ENCODE measurements at regions of chr7 and their contacts with region 1.

Region 1: GRCh38 chr7:141014524-141015395 is at the start of gene MRPS33:
- DNase-seq: peak; percentile 97
- H3K4me3 Mint-ChIP-seq: peak within 1 kb of the TSS; percentile 98
- H3K27ac Mint-ChIP-seq: peak within 1 kb of the TSS; percentile 100
- H3K4me1 Mint-ChIP-seq: peaks cover 33% of the 10 kb centered on the region
- H3K27me3 Mint-ChIP-seq: peaks cover 5% of the 10 kb centered on the region
- total RNA-seq, gene MRPS33: 95.4 to 95.8 TPM

Region 2: DNA sequence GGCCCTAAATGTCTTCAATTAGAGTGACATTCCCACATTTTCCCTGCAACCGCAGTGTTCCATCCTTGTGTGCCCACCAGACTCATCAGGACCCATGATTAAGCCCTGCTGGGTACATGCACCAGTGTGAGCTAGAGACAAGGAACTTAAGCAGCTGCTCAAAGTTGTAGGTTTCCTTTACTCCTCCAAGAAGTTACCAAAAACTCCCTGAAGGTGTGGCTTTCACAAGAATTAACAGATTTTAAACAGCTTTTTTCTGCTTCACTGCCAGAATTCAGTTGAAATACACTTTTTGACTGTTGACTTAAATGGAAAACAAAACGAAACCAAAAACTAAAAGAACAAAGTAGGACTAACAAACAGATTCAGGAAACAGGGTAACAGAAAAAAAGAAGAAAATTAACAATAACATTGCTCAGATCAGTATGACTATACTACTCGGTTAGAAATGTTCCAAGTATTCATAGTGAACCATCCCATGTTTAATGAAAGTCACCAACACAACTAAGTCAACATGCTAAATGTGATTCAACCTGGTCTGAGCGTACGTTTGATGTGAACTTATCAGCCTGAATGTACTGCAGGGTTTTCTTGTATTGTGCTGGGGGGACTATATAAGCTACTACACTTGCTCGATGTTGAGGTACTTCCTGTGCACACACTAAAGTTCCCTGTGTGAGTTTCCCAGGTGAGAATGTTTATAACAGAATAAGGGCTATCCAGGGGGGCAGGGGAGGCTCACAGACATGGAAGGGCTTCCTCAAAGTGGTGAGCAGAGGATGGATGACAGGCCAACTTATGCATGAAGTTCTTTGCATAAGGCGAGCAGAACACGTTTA is 638.6 kb before region 1 on chr7:
- CTCF ChIA-PET with region 1: no interaction called
- POLR2A ChIA-PET with region 1: no interaction called
- intact Hi-C with region 1: loop called (anchors 10 kb)
- DNase-seq: peak; percentile 61
- H3K4me3 Mint-ChIP-seq: peak overlapping the region; percentile 62
- H3K27ac Mint-ChIP-seq: peak overlapping the region; percentile 99
- H3K4me1 Mint-ChIP-seq: peaks cover 51% of the 10 kb centered on the region
- H3K27me3 Mint-ChIP-seq: no peaks in the 10 kb centered on the region

Region 3: GRCh38 chr7:140517546-140518369 is 497.0 kb before region 1 on chr7:
- CTCF ChIA-PET with region 1: interaction called, 8 read pairs
- POLR2A ChIA-PET with region 1: no interaction called
- intact Hi-C with region 1: loop called (anchors 1 kb)
- DNase-seq: peak; percentile 83
- H3K4me3 Mint-ChIP-seq: no peak overlapping the region
- H3K27ac Mint-ChIP-seq: no peak overlapping the region
- H3K4me1 Mint-ChIP-seq: no peaks in the 10 kb centered on the region
- H3K27me3 Mint-ChIP-seq: peaks cover 7% of the 10 kb centered on the region

Region 4: DNA sequence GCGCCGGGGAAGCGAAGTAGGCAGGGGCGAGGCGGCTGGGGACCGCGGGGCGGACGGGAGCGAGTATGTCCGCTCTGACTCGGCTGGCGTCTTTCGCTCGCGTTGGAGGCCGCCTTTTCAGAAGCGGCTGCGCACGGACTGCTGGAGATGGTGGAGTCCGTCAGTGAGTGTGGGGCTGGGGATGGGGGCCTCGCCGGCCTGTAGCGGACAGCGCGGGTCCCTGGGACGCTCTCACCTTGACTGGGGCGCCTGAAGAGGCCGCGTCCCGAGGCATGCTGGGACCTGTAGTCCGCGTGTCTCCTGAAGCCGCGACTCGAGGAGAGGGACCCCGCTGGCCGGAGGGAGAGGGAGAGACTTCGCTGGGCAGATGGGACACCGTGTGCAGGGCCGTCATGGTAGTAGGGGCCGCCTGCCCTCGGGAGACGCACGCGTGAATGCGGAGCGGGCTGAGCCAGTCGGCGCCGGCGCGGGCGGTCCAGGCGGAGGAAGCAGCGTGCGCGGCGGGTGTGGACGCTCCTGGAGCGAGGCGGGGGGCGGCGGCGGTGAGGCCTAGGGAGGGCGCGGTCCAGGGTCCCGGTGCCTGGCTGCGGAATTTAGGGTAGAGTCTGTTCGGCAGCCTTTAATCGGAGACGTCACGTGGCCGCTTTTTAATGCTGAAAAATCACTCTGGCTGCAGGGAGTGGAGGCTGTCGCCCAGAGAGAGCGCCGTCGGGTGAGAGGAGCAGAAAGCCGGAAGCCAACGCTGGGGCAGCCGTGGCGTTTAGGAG is 317.9 kb before region 1 on chr7 and contains the start of gene NDUFB2:
- CTCF ChIA-PET with region 1: no interaction called
- POLR2A ChIA-PET with region 1: no interaction called
- intact Hi-C with region 1: loop called (anchors 1 kb)
- DNase-seq: peak; percentile 80
- H3K4me3 Mint-ChIP-seq: peak within 1 kb of the TSS; percentile 95
- H3K27ac Mint-ChIP-seq: peak within 1 kb of the TSS; percentile 97
- H3K4me1 Mint-ChIP-seq: peaks cover 32% of the 10 kb centered on the region
- H3K27me3 Mint-ChIP-seq: no peaks in the 10 kb centered on the region
- total RNA-seq, gene NDUFB2: 171 to 183 TPM

Region 5: DNA sequence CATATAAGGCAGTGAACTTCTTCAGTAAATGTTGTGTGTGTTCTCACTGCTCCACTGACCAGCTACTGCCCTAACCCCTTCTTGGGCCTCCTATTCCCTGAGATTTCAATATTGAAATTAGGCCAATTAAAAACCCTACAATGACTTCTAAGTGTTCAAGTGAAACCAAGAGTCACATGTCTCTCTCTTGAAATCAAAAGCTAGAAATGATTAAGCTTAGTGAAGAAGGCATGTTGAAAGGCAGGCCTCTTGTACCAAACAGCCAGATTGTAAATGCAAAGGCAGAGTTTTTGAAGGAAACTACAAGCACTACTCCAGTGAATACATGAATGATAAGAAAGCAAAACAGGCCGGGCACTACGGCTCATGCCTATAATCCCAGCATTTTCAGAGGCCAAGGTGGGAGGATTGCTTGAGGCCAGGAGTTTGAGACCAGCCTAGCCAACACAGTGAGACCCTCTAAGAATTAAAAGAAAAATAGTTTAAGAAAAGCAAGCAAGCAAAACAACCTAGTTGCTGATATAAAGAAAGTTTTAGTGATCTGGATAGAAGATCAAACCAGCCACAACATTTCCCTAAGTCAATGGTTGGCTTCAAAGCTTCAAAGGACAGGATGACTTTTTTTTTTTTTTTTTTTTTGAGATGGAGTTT is 112.3 kb before region 1 on chr7:
- CTCF ChIA-PET with region 1: no interaction called
- POLR2A ChIA-PET with region 1: no interaction called
- intact Hi-C with region 1: loop called (anchors 1 kb)
- DNase-seq: no peak
- H3K4me3 Mint-ChIP-seq: peak overlapping the region; percentile 41
- H3K27ac Mint-ChIP-seq: peak overlapping the region; percentile 85
- H3K4me1 Mint-ChIP-seq: peaks cover 54% of the 10 kb centered on the region
- H3K27me3 Mint-ChIP-seq: no peaks in the 10 kb centered on the region

Region 6: GRCh38 chr7:141072548-141073172 is 57.9 kb after region 1 on chr7:
- CTCF ChIA-PET with region 1: interaction called, 6 read pairs
- POLR2A ChIA-PET with region 1: interaction called, 8 read pairs
- intact Hi-C with region 1: loop called (anchors 2 kb)
- DNase-seq: peak; percentile 54
- H3K4me3 Mint-ChIP-seq: peak overlapping the region; percentile 68
- H3K27ac Mint-ChIP-seq: no peak overlapping the region
- H3K4me1 Mint-ChIP-seq: peaks cover 12% of the 10 kb centered on the region
- H3K27me3 Mint-ChIP-seq: peaks cover 44% of the 10 kb centered on the region

Region 7: DNA sequence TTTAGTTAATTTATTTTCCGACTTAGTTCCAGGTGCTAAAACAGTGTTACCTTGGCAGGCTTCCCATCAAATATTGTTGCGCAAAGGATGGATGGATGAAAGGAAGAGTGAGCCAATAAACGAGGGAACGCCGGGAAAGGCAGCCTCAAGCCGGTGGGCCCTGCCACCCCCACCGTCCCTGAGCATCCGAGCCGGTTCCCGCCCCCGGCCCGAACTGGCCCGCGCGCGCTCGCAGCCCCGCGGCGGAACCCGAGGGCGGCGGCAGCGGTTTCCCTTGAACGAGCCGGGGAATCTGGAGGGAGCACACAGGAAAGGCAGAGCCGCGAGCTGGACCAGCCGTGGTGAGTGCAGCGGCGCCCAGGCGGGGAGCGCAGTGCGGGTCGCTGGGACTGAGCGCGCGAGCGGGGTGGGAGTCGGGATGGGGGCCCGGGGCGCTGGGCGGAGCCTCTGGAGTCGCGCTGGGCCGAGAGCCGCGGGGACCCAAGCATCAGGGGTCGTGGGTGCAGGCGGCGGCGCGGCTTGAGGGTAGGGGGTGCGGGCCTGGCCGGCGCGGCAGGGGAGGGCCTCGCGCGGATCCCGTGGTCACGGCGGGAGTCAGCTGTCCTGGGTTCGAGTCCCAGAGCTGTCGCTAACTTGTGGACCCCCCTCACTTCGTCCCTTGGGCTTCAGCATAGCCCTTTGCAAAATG is 536.5 kb after region 1 on chr7 and contains the start of gene AGK:
- CTCF ChIA-PET with region 1: no interaction called
- POLR2A ChIA-PET with region 1: interaction called, 8 read pairs
- intact Hi-C with region 1: loop called (anchors 1 kb)
- DNase-seq: peak; percentile 87
- H3K4me3 Mint-ChIP-seq: peak within 1 kb of the TSS; percentile 91
- H3K27ac Mint-ChIP-seq: peak within 1 kb of the TSS; percentile 87
- H3K4me1 Mint-ChIP-seq: peaks cover 31% of the 10 kb centered on the region
- H3K27me3 Mint-ChIP-seq: no peaks in the 10 kb centered on the region
- total RNA-seq, gene AGK: 50.2 to 57.2 TPM